Endothelial cell of umbilical vein (primary cell): ENCODE measurements at regions of chr17 and their contacts with region 1.

Region 1: GRCh38 chr17:57130761-57131461 is 45.9 kb downstream of the AKAP1 start:
- DNase-seq: peak; percentile 57
- H3K4me3 ChIP-seq: no peak overlapping the region
- H3K27ac ChIP-seq: no peak overlapping the region
- H3K4me1 ChIP-seq: no peaks in the 10 kb centered on the region
- H3K27me3 ChIP-seq: no peaks in the 10 kb centered on the region
- CTCF ChIP-seq: peak; percentile 46 to 85
- POLR2A ChIP-seq: no peak

Region 2: GRCh38 chr17:57440522-57441485 is 309.9 kb after region 1 on chr17:
- CTCF ChIA-PET with region 1: no interaction called
- POLR2A ChIA-PET with region 1: no interaction called
- dilution Hi-C with region 1: no loop called
- intact Hi-C with region 1: loop called (anchors 1 kb)
- DNase-seq: peak; percentile 55
- H3K4me3 ChIP-seq: no peak overlapping the region
- H3K27ac ChIP-seq: no peak overlapping the region
- H3K4me1 ChIP-seq: peaks cover 21% of the 10 kb centered on the region
- H3K27me3 ChIP-seq: no peaks in the 10 kb centered on the region
- CTCF ChIP-seq: peak; percentile 43 to 58
- POLR2A ChIP-seq: no peak

Region 3: DNA sequence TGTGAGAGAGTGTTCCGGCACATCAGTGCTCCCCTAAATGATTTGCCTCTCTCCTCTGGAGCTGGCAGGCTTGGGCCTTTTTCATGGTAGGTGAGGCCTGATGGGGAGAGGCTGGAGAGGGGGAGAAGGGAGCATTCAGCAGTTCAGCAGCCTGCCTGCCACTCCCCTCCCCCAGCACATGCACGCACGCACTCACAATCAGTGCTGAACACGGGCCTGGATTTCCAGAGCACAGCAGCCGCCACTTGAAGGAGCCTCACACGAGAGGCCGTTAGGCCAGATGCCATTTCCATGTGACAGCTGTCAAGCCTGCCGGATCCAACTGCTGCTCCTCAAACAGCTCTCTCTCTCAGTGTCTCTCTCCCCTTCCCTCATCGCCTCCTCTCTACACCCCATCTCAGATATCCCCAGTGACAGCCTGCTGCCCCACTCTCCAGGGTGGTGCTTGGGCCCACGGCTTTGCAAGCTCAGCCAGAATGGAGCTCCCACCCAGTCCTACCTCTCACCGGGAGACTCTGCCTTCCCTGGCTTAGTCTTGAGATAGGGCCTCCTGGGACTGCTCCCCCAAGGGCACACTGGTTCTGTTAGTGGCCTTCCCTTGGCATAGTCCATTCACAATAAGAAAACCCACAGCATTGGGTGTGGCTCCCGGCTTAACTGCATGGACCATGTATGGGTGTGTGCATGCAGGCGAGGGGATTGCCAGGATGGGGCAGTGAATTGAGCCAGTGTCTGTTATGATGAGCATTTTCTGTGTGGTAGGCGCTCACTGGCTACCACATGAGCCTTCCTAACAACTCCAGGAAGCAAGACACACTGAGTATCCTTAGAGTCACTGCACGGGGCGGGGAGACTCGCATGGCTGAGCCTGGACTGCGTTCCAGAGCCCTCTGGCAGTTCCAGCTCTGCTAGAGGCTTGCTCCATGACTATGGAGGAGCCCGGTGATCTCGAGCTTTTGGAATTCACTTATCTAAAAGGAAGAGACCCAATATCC is 388.0 kb after region 1 on chr17:
- CTCF ChIA-PET with region 1: interaction called, 4 read pairs
- POLR2A ChIA-PET with region 1: no interaction called
- dilution Hi-C with region 1: no loop called
- intact Hi-C with region 1: loop called (anchors 1 kb)
- DNase-seq: no peak
- H3K4me3 ChIP-seq: no peak overlapping the region
- H3K27ac ChIP-seq: no peak overlapping the region
- H3K4me1 ChIP-seq: no peaks in the 10 kb centered on the region
- H3K27me3 ChIP-seq: no peaks in the 10 kb centered on the region
- CTCF ChIP-seq: no peak
- POLR2A ChIP-seq: no peak

Region 4: DNA sequence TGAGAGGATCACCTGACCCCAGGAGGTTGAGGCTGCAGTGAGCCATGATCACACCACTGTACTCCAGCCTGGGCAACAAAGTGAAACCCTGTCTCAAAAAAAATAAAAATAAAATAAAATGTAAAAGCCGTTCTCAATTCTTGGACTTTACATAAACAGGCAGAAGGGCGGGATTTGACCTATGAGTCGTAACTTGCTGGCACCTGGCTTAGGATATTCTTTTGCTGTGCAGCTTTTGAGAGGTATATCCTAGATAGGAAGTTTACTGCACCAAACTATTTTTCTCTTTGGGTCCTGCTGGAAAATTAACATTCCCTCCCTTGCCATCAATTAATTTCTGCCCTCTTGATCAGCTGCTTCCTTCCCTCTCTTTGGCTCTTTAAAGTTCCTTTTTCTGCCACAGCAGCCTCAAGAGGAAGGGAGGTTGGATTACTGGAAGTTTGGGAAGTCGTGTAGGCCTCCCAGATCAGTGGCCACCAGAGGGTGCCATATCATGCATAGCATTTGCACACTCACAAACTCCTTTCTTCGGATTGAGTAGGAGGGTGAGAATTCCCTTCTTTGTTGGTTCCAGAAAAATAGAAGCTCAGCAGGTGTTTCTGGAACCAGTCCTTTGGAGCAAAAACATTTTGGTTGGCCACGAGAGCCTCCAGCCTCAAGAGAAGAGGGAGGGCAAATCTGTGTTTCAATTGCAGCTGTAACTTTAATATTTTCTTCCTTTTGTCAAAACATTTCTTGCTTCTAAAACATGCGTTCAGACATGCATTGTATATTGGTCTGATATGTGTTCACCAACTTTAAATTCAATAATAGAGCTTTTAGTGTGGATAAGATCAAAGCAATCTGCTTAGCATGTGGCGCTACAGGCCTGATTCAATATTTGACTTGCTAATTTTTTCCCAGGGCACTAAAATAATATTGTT is 466.9 kb after region 1 on chr17:
- CTCF ChIA-PET with region 1: interaction called, 5 read pairs
- POLR2A ChIA-PET with region 1: interaction called, 4 read pairs
- dilution Hi-C with region 1: no loop called
- intact Hi-C with region 1: loop called (anchors 1 kb)
- DNase-seq: peak; percentile 67
- H3K4me3 ChIP-seq: no peak overlapping the region
- H3K27ac ChIP-seq: no peak overlapping the region
- H3K4me1 ChIP-seq: no peaks in the 10 kb centered on the region
- H3K27me3 ChIP-seq: peaks cover 7 to 9% of the 10 kb centered on the region in 2 experiments
- CTCF ChIP-seq: peak; percentile 78 to 79
- POLR2A ChIP-seq: no peak